Activated CD4-positive, alpha-beta memory T cell treated with anti-CD3 and anti-CD28 coated beads for 36 hours (primary cell): ENCODE measurements at regions of chr11 and their contacts with region 1.

Region 1: DNA sequence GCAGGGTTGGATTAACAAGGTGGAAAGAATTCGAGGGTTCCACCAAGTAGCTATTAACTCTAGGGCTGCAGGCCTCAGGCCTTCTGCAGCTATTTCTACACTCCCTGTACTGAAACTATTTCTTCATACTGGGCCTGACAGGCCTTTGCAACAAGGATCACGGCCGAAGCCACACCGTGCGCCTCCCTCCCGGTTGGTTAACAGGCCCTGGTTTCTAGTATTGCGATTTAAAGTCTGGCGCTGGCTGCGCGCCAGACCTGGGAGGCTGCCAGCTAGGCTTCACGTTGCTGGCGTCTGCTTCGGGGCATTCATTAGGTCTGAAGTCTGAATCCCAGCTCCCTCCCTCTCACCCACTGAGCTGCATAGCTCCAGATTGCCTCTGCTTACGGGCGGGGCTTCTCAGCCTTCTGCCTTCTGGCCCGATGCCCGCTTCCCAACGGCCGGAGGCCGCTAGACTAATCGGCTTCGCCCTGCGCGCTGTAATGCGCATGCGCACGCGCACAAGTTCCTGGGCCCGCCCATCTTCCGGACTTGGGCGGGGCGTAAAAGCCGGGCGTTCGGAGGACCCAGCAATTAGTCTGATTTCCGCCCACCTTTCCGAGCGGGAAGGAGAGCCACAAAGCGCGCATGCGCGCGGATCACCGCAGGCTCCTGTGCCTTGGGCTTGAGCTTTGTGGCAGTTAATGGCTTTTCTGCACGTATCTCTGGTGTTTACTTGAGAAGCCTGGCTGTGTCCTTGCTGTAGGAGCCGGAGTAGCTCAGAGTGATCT is 1.6 kb downstream of the LDHA start:
- DNase-seq: peak; percentile 98
- H3K4me3 Mint-ChIP-seq: peak overlapping the region; percentile 98
- H3K27ac Mint-ChIP-seq: peak overlapping the region; percentile 98
- H3K4me1 Mint-ChIP-seq: peaks cover 63% of the 10 kb centered on the region
- H3K27me3 Mint-ChIP-seq: no peaks in the 10 kb centered on the region

Region 2: GRCh38 chr11:18105802-18106574 is 289.9 kb before region 1 on chr11 and contains the start of gene SAAL1:
- CTCF ChIA-PET with region 1: no interaction called
- POLR2A ChIA-PET with region 1: no interaction called
- intact Hi-C with region 1: loop called (anchors 10 kb)
- DNase-seq: peak; percentile 94
- H3K4me3 Mint-ChIP-seq: peak within 1 kb of the TSS; percentile 92
- H3K27ac Mint-ChIP-seq: peak within 1 kb of the TSS; percentile 78
- H3K4me1 Mint-ChIP-seq: peaks cover 37% of the 10 kb centered on the region
- H3K27me3 Mint-ChIP-seq: peaks cover 4% of the 10 kb centered on the region
- total RNA-seq, gene SAAL1: 32.1 to 34.3 TPM

Region 3: GRCh38 chr11:18243783-18244362 is 152.0 kb before region 1 on chr11:
- CTCF ChIA-PET with region 1: interaction called, 8 read pairs
- POLR2A ChIA-PET with region 1: interaction called, 3 read pairs
- intact Hi-C with region 1: loop called (anchors 2 kb)
- DNase-seq: peak; percentile 73
- H3K4me3 Mint-ChIP-seq: no peak overlapping the region
- H3K27ac Mint-ChIP-seq: no peak overlapping the region
- H3K4me1 Mint-ChIP-seq: peaks cover 16% of the 10 kb centered on the region
- H3K27me3 Mint-ChIP-seq: peaks cover 7% of the 10 kb centered on the region

Region 4: DNA sequence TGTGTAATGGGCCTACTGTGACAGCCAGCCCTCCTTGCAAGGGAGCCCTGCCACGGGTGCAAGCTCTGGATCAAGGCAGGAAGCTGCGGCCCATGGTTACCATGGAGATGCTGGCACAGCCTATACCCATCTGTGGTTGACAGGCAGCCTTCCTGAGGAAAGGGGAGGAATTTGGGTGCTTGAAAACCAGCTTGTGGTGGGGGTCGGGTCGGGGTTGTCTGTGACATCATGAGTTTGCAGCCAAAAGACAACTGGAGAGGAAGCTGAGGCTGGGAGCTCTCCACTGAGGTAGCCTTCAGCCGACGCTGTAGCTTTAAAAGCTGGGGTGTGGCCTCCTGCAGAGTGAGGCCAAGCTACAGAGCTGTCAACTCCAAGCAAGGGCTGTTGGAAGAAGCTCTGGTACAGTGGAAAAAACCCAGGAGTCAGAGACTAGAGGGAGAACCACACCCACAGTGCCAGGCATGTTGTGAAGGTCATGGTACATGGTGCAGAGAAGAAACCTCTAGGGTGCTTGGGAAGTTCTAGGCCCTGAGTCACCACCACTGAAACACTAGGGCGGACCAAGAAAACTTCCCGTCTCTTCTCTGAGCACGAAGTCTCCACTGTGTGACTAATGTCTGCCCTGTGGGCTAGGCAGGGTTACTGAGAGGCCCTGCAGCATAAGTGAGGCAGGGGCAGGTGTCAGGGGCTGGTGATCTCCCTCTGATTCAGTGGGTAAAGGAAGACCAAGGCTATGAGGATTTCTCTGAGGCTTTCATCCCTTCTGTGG is 12.3 kb before region 1 on chr11:
- CTCF ChIA-PET with region 1: interaction called, 38 read pairs
- POLR2A ChIA-PET with region 1: interaction called, 175 read pairs
- intact Hi-C with region 1: loop called (anchors 1 kb)
- DNase-seq: peak; percentile 92
- H3K4me3 Mint-ChIP-seq: peak overlapping the region; percentile 59
- H3K27ac Mint-ChIP-seq: peak overlapping the region; percentile 99
- H3K4me1 Mint-ChIP-seq: peaks cover 43% of the 10 kb centered on the region
- H3K27me3 Mint-ChIP-seq: no peaks in the 10 kb centered on the region

Region 5: GRCh38 chr11:18408558-18409242 is 12.8 kb after region 1 on chr11:
- CTCF ChIA-PET with region 1: interaction called, 4 read pairs
- POLR2A ChIA-PET with region 1: interaction called, 13 read pairs
- intact Hi-C with region 1: no loop called
- DNase-seq: no peak
- H3K4me3 Mint-ChIP-seq: no peak overlapping the region
- H3K27ac Mint-ChIP-seq: peak overlapping the region; percentile 9
- H3K4me1 Mint-ChIP-seq: peaks cover 9% of the 10 kb centered on the region
- H3K27me3 Mint-ChIP-seq: no peaks in the 10 kb centered on the region

Region 6: GRCh38 chr11:18588297-18589252 is 192.7 kb after region 1 on chr11 and contains the start of gene UEVLD:
- CTCF ChIA-PET with region 1: no interaction called
- POLR2A ChIA-PET with region 1: interaction called, 8 read pairs
- intact Hi-C with region 1: loop called (anchors 5 kb)
- DNase-seq: peak; percentile 81
- H3K4me3 Mint-ChIP-seq: no peak within 1 kb of the TSS
- H3K27ac Mint-ChIP-seq: no peak within 1 kb of the TSS
- H3K4me1 Mint-ChIP-seq: peaks cover 10% of the 10 kb centered on the region
- H3K27me3 Mint-ChIP-seq: no peaks in the 10 kb centered on the region
- total RNA-seq, gene UEVLD: 20.9 to 26.2 TPM